ENCODE measurements at regions of chr14 and their contacts with region 1.

Region 1: GRCh38 chr14:73851644-73852382 is at the start of gene PTGR2:
- DNase-seq: peak; percentile 97
- H3K4me3 Mint-ChIP-seq: peak within 1 kb of the TSS; percentile 91
- H3K27ac Mint-ChIP-seq: peak within 1 kb of the TSS; percentile 98
- H3K4me1 Mint-ChIP-seq: peaks cover 18% of the 10 kb centered on the region
- H3K27me3 Mint-ChIP-seq: no peaks in the 10 kb centered on the region
- CTCF ChIP-seq: no peak
- total RNA-seq, gene PTGR2: 9.2 and 13.1 TPM in 2 replicates

Region 2: DNA sequence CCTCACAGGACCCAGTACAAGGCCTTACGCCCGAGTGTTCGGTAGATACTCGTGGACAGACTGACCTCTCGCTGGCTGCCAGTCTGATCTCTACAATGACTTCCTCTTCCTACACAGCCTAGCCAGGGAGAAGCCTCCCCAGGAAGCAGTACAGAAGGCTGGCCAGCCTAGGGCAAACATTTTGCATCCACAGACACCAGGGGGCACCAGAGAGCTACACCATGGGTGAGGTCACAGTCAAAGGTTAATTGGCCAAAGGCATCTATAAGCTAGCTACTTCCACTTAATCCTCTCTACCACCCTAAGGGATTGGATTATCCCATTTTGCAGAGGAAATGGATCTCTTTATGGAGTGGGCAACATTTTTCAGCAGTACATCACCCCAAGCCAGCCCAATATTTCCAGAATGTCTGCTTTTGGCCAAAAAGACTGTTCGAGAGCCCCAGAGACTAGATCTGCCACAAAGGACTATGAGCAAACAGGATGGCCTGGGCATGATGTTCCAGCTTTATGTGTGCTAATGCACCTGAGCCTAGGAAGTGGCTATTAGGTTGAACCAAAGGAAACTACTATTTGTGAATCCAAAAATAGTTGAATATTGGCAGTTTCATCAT is 123.0 kb before region 1 on chr14:
- CTCF ChIA-PET with region 1: interaction called, 5 read pairs
- POLR2A ChIA-PET with region 1: interaction called, 17 read pairs
- intact Hi-C with region 1: no loop called
- DNase-seq: peak; percentile 86
- H3K4me3 Mint-ChIP-seq: no peak overlapping the region
- H3K27ac Mint-ChIP-seq: peak overlapping the region; percentile 71
- H3K4me1 Mint-ChIP-seq: peaks cover 33% of the 10 kb centered on the region
- H3K27me3 Mint-ChIP-seq: no peaks in the 10 kb centered on the region
- CTCF ChIP-seq: peak; percentile 91

Region 3: GRCh38 chr14:73753959-73754882 is 97.6 kb before region 1 on chr14:
- CTCF ChIA-PET with region 1: no interaction called
- POLR2A ChIA-PET with region 1: interaction called, 89 read pairs
- intact Hi-C with region 1: no loop called
- DNase-seq: peak; percentile 48
- H3K4me3 Mint-ChIP-seq: peak overlapping the region; percentile 86
- H3K27ac Mint-ChIP-seq: peak overlapping the region; percentile 89
- H3K4me1 Mint-ChIP-seq: peaks cover 71% of the 10 kb centered on the region
- H3K27me3 Mint-ChIP-seq: no peaks in the 10 kb centered on the region
- CTCF ChIP-seq: no peak

Region 4: DNA sequence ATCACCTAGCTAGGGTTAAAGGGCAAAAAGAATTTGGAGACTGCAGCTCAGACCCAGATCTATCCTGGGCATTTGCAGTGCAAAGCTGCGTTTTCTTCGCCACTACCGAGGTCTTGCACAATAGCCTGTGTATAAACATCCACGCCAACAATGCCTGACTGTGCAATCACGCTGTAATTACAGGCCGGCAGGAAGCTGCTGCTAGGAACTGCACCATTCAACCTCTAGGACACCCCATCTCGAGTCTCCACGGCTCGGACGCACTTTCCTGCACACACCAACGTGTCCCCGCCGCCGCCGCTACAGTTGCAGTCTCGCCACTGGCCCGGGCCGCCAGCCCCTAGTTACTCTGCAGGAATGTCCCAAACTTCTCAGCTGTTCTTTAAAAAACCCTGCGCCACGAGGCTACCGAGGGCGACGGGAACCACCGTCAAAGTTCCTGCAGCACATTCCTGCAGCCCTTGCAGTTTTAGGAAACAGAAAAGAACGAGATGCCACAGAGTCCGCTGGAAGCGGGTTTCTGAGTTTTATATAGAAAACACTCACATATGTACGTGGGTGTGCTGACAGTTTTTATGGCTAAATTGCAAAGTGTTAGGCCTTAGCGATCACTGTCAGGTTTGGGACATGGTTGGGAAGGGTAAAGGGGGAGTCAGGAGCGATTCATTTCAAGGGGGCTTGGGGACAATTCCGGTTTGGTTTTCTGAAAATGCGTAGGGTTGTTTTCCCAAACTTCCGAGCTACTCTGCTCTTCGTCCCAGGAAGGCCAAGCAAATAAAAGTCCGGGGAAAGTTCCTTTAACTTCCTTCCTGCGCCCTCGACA is 65.7 kb before region 1 on chr14:
- CTCF ChIA-PET with region 1: no interaction called
- POLR2A ChIA-PET with region 1: interaction called, 79 read pairs
- intact Hi-C with region 1: no loop called
- DNase-seq: peak; percentile 93
- H3K4me3 Mint-ChIP-seq: peak overlapping the region; percentile 81
- H3K27ac Mint-ChIP-seq: peak overlapping the region; percentile 78
- H3K4me1 Mint-ChIP-seq: peaks cover 61% of the 10 kb centered on the region
- H3K27me3 Mint-ChIP-seq: no peaks in the 10 kb centered on the region
- CTCF ChIP-seq: no peak

Region 5: DNA sequence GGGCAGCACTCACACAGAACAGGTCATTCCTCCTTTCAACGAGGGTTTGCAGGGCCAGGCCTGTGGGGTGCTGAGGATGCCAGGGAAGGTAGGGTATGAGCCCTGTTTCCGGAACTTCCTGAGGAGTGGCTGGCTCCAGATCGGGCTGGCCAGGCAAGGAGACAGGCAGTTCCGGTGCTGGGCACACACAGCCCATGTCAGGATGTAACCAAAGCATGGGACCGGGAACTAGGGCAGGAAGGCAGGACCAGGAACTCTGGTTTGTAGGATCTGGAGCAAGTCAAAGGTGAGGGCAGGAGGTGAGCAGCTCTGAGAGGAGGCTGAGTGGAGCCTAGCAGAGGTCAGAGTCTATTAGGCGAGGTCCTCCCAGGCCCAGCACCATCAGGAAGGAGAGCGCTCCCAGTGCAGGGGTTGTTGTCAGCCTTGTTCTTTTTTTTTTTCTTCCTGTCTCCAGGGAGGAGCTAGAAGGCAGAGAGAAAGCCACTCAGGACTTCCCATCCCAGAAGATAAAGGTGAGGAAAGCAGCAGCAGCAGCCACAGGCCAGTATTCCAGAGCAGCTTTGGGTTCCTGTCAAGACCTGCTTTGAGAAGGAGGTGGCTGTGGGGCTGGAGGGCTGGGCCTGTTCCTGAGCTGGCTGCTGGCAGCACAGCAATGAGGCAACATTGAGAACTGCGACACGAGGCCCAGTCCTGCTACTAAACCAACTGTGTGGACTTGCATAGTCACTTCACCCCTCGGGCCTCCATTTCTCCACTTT is 49.2 kb before region 1 on chr14:
- CTCF ChIA-PET with region 1: no interaction called
- POLR2A ChIA-PET with region 1: interaction called, 21 read pairs
- intact Hi-C with region 1: no loop called
- DNase-seq: peak; percentile 80
- H3K4me3 Mint-ChIP-seq: peak overlapping the region; percentile 47
- H3K27ac Mint-ChIP-seq: peak overlapping the region; percentile 86
- H3K4me1 Mint-ChIP-seq: peaks cover 25% of the 10 kb centered on the region
- H3K27me3 Mint-ChIP-seq: no peaks in the 10 kb centered on the region
- CTCF ChIP-seq: no peak

Region 6: DNA sequence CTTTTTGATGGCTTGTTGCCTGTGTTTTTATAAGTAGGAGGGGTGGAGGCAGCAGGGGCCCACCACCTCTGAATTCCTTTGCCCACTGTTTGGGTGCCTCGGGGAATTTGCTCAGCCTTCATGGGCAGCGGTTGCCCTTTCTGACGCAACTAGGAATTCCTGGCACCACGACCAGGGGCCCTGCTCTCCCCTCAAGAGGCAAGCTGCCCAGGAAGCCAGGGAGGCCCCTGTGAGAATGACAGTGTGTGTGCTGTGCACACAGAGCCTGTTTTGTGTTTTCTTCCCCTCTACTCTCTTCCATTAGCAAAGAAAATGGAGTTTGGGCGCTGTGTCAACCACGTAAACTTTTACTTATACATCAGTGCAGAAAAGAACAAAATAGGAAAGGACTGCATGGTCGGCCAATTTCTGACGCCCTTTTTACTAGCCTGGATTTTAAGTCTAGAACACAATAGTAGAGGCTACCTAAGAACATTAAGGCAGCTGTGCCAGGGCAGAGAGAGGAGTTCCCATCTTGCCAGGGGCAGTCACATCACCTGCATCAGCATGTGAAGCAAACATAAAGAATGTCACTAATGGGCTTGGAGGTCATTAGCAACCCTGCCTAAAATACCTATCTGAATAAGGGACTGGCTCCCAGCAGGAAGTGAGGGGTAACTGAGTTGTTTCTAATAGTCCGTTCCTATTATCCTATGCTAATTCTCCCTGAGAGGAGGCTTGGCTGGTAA is 18.1 kb before region 1 on chr14:
- CTCF ChIA-PET with region 1: no interaction called
- POLR2A ChIA-PET with region 1: interaction called, 34 read pairs
- intact Hi-C with region 1: no loop called
- DNase-seq: peak; percentile 76
- H3K4me3 Mint-ChIP-seq: no peak overlapping the region
- H3K27ac Mint-ChIP-seq: no peak overlapping the region
- H3K4me1 Mint-ChIP-seq: peaks cover 10% of the 10 kb centered on the region
- H3K27me3 Mint-ChIP-seq: no peaks in the 10 kb centered on the region
- CTCF ChIP-seq: no peak

Region 7: GRCh38 chr14:73886449-73887317 is 34.9 kb after region 1 on chr14 and contains the start of gene ZNF410:
- CTCF ChIA-PET with region 1: interaction called, 3 read pairs
- POLR2A ChIA-PET with region 1: interaction called, 95 read pairs
- intact Hi-C with region 1: loop called (anchors 1 kb)
- DNase-seq: peak; percentile 97
- H3K4me3 Mint-ChIP-seq: peak within 1 kb of the TSS; percentile 82
- H3K27ac Mint-ChIP-seq: peak within 1 kb of the TSS; percentile 93
- H3K4me1 Mint-ChIP-seq: peaks cover 30% of the 10 kb centered on the region
- H3K27me3 Mint-ChIP-seq: no peaks in the 10 kb centered on the region
- CTCF ChIP-seq: no peak
- total RNA-seq, gene ZNF410: 74.0 and 76.0 TPM in 2 replicates